ENCODE measurements at regions of chr11 and their contacts with region 1.

Region 1: DNA sequence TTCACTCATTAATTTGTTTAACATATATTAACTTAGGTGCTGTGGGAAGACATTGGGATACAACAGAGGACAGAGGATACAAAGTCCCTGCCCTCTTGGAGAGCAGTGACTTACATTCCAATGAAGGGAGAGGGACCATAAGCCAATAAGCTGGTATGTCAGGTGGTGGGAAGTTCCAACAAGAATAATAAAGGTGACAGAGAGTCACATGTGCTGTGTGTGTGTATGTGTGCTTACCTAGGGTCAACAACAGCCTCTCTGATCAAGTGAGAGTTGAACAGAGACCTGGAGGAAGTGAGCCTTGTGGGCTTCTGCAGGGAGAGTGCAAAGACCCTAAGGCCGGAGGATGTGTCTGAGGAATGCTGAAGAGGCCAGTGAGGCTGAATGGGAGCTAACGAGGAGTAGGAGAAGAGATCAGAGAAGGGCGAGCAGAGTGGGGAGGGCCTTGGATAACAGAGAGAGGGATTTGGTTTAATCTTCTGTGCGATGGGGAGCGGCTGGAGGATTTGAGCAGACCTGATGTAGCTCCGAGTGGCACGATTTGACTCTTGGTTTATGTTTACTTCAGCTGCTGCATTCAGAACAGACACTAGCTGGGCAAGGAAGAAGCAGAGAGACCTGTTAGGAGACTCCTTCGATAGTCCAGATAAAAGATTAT is 35.3 kb downstream of the MAP6 start:
- DNase-seq: peak; percentile 85 to 89
- H3K4me3 ChIP-seq: no peak overlapping the region
- H3K4me3 Mint-ChIP-seq: peak overlapping the region; percentile 50
- H3K27ac Mint-ChIP-seq: peak overlapping the region; percentile 92
- H3K4me1 ChIP-seq: peaks cover 65% of the 10 kb centered on the region
- H3K4me1 Mint-ChIP-seq: peaks cover 43% of the 10 kb centered on the region
- H3K27me3 ChIP-seq: no peaks in the 10 kb centered on the region
- H3K27me3 Mint-ChIP-seq: no peaks in the 10 kb centered on the region
- CTCF ChIP-seq: no peak

Region 2: DNA sequence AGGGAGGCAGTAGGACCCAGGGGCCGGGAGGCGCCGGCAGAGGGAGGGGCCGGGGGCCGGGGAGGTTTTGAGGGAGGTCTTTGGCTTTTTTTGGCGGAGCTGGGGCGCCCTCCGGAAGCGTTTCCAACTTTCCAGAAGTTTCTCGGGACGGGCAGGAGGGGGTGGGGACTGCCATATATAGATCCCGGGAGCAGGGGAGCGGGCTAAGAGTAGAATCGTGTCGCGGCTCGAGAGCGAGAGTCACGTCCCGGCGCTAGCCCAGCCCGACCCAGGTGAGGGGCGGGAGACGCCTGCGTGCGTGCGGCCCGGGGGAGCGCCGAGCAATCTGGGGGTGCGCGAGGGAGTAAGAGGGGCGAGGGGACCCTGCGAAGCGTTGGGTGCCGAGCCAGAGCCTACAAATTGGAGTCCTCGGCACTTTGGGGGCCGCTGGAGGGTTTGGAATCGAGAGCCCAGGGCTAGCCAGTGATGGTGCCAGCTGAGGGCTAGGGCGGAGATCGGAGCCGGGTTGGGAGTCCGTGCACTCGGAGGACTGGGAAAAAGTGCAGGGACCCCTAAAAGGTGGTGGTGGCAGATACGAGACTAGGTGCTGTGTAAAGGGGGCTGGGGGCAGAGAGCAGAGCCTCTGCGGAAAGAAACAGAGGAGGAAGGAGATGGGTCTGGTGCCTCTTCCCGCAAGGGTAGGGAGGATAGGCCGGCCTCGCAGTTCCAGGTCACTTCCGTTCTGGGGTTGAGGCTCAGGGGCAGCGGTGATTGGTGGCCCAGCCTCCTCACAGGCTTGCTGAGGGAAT is 71.3 kb before region 1 on chr11 and contains the start of gene SERPINH1:
- CTCF ChIA-PET with region 1: interaction called, 3 read pairs
- POLR2A ChIA-PET with region 1: interaction called, 3 read pairs
- intact Hi-C with region 1: loop called (anchors 1 kb)
- DNase-seq: peak; percentile 92
- H3K4me3 ChIP-seq: peak within 1 kb of the TSS; percentile 51
- H3K4me3 Mint-ChIP-seq: peak within 1 kb of the TSS; percentile 93
- H3K27ac Mint-ChIP-seq: peak within 1 kb of the TSS; percentile 95
- H3K4me1 ChIP-seq: peaks cover 71% of the 10 kb centered on the region
- H3K4me1 Mint-ChIP-seq: peaks cover 44% of the 10 kb centered on the region
- H3K27me3 ChIP-seq: no peaks in the 10 kb centered on the region
- H3K27me3 Mint-ChIP-seq: no peaks in the 10 kb centered on the region
- CTCF ChIP-seq: no peak
- total RNA-seq, gene SERPINH1: 481 and 528 TPM in 2 replicates

Region 3: GRCh38 chr11:75582895-75583717 is 50.4 kb before region 1 on chr11:
- CTCF ChIA-PET with region 1: interaction called, 7 read pairs
- POLR2A ChIA-PET with region 1: interaction called, 4 read pairs
- intact Hi-C with region 1: loop called (anchors 2 kb)
- DNase-seq: peak; percentile 90 to 93
- H3K4me3 ChIP-seq: peak overlapping the region; percentile 75
- H3K4me3 Mint-ChIP-seq: peak overlapping the region; percentile 79
- H3K27ac Mint-ChIP-seq: peak overlapping the region; percentile 78
- H3K4me1 ChIP-seq: peaks cover 15% of the 10 kb centered on the region
- H3K4me1 Mint-ChIP-seq: peaks cover 21% of the 10 kb centered on the region
- H3K27me3 ChIP-seq: no peaks in the 10 kb centered on the region
- H3K27me3 Mint-ChIP-seq: no peaks in the 10 kb centered on the region
- CTCF ChIP-seq: peak; percentile 50 to 58

Region 4: GRCh38 chr11:75656044-75656727 is 22.6 kb after region 1 on chr11:
- CTCF ChIA-PET with region 1: interaction called, 3 read pairs
- POLR2A ChIA-PET with region 1: interaction called, 6 read pairs
- intact Hi-C with region 1: loop called (anchors 1 kb)
- DNase-seq: peak; percentile 82 to 96
- H3K4me3 ChIP-seq: no peak overlapping the region
- H3K4me3 Mint-ChIP-seq: peak overlapping the region; percentile 3
- H3K27ac Mint-ChIP-seq: peak overlapping the region; percentile 6
- H3K4me1 ChIP-seq: peaks cover 89% of the 10 kb centered on the region
- H3K4me1 Mint-ChIP-seq: peaks cover 65% of the 10 kb centered on the region
- H3K27me3 ChIP-seq: no peaks in the 10 kb centered on the region
- H3K27me3 Mint-ChIP-seq: no peaks in the 10 kb centered on the region
- CTCF ChIP-seq: peak; percentile 26 to 36

Region 5: DNA sequence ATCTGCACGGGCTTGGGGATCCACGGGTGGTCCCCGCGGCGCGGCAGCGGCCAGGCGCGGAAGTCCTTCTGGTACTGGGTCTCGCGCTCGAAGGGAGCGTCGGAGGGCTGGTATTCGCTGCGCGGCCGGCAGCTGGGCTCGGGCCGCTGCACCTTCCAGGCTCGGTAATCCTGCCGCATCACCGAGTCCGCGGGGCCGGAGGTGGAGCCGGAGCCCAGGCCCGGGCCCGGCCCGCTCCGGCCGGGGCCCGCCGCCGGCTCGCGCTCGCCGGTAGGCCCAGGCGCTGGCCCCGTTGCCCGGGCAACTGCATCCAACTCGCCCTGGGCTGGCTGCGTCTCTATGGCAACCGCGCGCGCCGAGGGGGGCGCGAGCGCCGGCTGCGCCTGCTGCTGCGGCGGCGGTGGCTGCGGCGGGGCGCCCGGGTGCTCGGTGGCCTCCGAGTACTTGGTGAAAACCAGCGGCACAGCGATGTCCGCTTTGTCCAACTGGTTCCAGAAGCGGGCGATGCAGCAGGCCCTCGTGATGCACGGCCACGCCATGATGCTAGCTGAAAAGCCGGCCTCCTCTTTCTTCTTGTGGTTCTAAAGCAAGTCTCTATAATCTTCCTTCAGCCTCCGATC is 34.4 kb after region 1 on chr11:
- CTCF ChIA-PET with region 1: interaction called, 4 read pairs
- POLR2A ChIA-PET with region 1: no interaction called
- intact Hi-C with region 1: loop called (anchors 1 kb)
- DNase-seq: peak; percentile 85 to 90
- H3K4me3 ChIP-seq: peak overlapping the region; percentile 69
- H3K4me3 Mint-ChIP-seq: peak overlapping the region; percentile 82
- H3K27ac Mint-ChIP-seq: peak overlapping the region; percentile 68
- H3K4me1 ChIP-seq: peaks cover 42% of the 10 kb centered on the region
- H3K4me1 Mint-ChIP-seq: peaks cover 33% of the 10 kb centered on the region
- H3K27me3 ChIP-seq: no peaks in the 10 kb centered on the region
- H3K27me3 Mint-ChIP-seq: no peaks in the 10 kb centered on the region
- CTCF ChIP-seq: no peak

Measured in Caco-2 (cell line).